Left cardiac atrium (tissue), 4 donors: ENCODE measurements at regions of chr5 and their contacts with region 1.

Region 1: GRCh38 chr5:155189981-155190380 is 176.4 kb downstream of the KIF4B start:
- DNase-seq: no peak
- ATAC-seq: no peak

Region 2: GRCh38 chr5:155091063-155091648 is 98.8 kb before region 1 on chr5:
- intact Hi-C with region 1: loop called in 1 of 2 experiments (anchors 5 kb)
- DNase-seq: no peak
- ATAC-seq: peak; percentile 59 to 65

Region 3: DNA sequence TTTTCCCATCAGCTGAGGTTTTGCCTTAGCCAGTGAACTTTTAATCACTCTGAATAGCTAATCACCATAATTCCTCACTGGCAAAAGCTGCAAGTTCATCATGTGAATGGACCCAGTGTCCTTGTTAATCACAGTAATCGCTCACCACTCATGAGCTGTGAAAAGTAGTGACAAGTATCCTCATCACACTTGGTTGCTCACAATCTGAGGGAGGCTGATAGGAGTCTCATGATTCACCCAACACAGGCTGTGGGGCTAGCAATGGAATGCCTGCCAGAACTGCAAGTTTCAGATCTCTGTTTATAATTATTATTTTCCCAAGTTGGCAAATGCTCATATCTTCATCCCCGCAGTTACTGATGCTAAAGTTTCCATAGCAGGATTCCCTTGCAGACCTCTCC is 290.8 kb after region 1 on chr5:
- intact Hi-C with region 1: loop called in 1 of 2 experiments (anchors 5 kb)
- DNase-seq: peak; percentile 24
- ATAC-seq: peak; percentile 94 to 97